CD4-positive, alpha-beta memory T cell (primary cell): ENCODE measurements at regions of chr5 and their contacts with region 1.

Region 1: DNA sequence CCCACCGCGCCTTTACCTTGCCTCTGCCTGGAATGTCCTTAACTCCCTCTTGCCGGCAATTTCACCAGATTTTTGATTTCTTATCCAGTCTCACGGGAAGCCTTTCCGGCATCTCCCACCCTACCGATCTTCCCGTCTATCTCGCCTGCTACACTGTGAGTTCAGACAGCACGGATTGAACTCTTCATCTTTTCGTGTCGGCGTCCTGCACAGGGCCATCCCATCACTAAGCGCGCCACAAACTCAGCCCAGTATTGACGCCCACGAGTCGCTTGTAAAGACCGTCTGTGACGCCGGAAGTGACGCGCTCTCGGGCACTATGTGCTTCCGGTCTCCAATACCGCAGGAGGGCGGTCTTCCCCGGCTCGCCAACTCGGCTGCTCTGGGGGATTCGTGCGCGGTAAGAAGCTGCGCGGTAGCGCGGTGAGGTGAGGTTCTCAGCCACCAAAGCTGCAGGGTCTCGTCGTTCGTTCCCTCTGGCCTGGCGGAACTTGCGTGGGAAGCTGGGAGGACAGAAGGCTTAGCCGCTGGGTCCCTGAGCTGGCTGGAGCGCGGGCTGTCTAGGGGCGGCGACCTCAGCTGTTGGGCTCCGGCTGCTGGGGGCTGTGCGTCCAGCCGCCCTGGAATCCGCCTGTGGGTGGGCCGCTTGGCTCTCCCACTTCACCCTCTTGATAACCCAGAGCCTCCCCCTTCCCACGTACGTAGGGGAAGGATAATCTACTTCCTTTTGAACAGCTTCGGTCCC is at the start of gene ZCCHC9:
- DNase-seq: peak; percentile 90 to 94 (median 92)
- H3K4me3 ChIP-seq: peak within 1 kb of the TSS; percentile 98 to 99
- H3K4me3 Mint-ChIP-seq: peak within 1 kb of the TSS; percentile 91 to 99 (median 94)
- H3K27ac ChIP-seq: peak within 1 kb of the TSS; percentile 83
- H3K27ac Mint-ChIP-seq: peak within 1 kb of the TSS; percentile 87 to 99 (median 97)
- H3K4me1 ChIP-seq: peaks cover 30% of the 10 kb centered on the region
- H3K4me1 Mint-ChIP-seq: peaks cover 30 to 67% (median 49%) of the 10 kb centered on the region in 4 donors
- H3K27me3 ChIP-seq: no peaks in the 10 kb centered on the region
- H3K27me3 Mint-ChIP-seq: no peaks in the 10 kb centered on the region
- total RNA-seq, gene ZCCHC9: 25.2 to 26.1 TPM

Region 2: GRCh38 chr5:79612667-79613198 is 1688.7 kb before region 1 on chr5:
- CTCF ChIA-PET with region 1: no interaction called
- POLR2A ChIA-PET with region 1: interaction called, 3 read pairs
- intact Hi-C with region 1: loop called (anchors 10 kb)
- DNase-seq: no peak
- H3K4me3 ChIP-seq: peak overlapping the region; percentile 67 to 94
- H3K4me3 Mint-ChIP-seq: peak overlapping the region; percentile 94 to 100 (median 99)
- H3K27ac ChIP-seq: peak overlapping the region; percentile 96
- H3K27ac Mint-ChIP-seq: peak overlapping the region; percentile 98 to 99 (median 98)
- H3K4me1 ChIP-seq: peaks cover 32% of the 10 kb centered on the region
- H3K4me1 Mint-ChIP-seq: peaks cover 24 to 53% (median 36%) of the 10 kb centered on the region in 4 donors
- H3K27me3 ChIP-seq: no peaks in the 10 kb centered on the region
- H3K27me3 Mint-ChIP-seq: peaks cover 0 to 8% of the 10 kb centered on the region in 2 donors

Region 3: GRCh38 chr5:80654391-80655230 is 646.8 kb before region 1 on chr5 and contains the starts of genes DHFR and MSH3:
- CTCF ChIA-PET with region 1: no interaction called
- POLR2A ChIA-PET with region 1: interaction called, 4 read pairs
- intact Hi-C with region 1: loop called (anchors 1 kb)
- DNase-seq: peak; percentile 86 to 91 (median 91)
- H3K4me3 ChIP-seq: peak within 1 kb of the TSS; percentile 64 to 79
- H3K4me3 Mint-ChIP-seq: peak within 1 kb of the TSS; percentile 86 to 97 (median 94)
- H3K27ac ChIP-seq: peak within 1 kb of the TSS; percentile 67
- H3K27ac Mint-ChIP-seq: peak within 1 kb of the TSS; percentile 86 to 99 (median 97)
- H3K4me1 ChIP-seq: peaks cover 34% of the 10 kb centered on the region
- H3K4me1 Mint-ChIP-seq: peaks cover 20 to 37% (median 27%) of the 10 kb centered on the region in 4 donors
- H3K27me3 ChIP-seq: no peaks in the 10 kb centered on the region
- H3K27me3 Mint-ChIP-seq: no peaks in the 10 kb centered on the region
- total RNA-seq, gene DHFR: 18.5 to 19.2 TPM
- total RNA-seq, gene MSH3: 14.3 to 17.1 TPM

Region 4: DNA sequence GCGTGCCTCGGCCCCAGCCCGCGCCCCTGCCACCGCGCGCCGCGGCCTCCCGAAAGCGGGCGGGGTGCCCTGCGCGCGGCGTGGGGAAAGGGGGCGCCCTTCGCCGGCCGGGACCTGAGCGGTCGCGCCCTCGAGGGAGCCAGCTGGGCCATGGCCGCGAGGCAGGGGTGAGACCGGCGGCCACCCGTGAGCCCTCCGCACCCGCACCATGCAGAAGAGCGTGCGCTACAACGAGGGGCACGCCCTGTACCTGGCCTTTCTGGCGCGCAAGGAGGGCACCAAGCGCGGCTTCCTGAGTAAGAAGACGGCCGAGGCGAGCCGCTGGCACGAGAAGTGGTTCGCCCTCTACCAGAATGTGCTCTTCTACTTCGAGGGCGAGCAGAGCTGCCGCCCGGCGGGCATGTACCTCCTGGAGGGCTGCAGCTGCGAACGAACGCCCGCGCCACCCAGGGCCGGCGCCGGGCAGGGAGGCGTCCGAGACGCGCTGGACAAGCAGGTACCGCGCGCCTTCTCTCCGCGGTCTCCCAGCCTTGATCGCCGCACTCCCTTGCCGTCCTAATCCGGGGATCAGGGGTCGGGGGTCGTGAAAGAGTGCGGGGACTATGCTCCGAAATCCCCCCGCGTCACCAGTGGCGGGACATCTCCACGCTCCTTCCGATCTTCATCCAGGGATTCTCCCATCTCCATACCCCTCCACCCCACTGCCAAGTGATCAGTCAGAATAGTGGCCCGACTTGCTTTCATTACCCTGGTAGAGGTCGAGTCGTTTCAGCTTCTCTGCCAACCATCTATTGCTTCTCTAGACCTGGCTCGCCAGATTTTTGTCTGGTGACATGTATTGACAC is 340.7 kb before region 1 on chr5:
- CTCF ChIA-PET with region 1: no interaction called
- POLR2A ChIA-PET with region 1: no interaction called
- intact Hi-C with region 1: loop called (anchors 5 kb)
- DNase-seq: peak; percentile 45 to 59 (median 55)
- H3K4me3 ChIP-seq: peak overlapping the region; percentile 84 to 85
- H3K4me3 Mint-ChIP-seq: peak overlapping the region; percentile 87 to 97 (median 94)
- H3K27ac ChIP-seq: peak overlapping the region; percentile 44
- H3K27ac Mint-ChIP-seq: peak overlapping the region; percentile 76 to 94 (median 82)
- H3K4me1 ChIP-seq: peaks cover 52% of the 10 kb centered on the region
- H3K4me1 Mint-ChIP-seq: peaks cover 40 to 64% (median 50%) of the 10 kb centered on the region in 4 donors
- H3K27me3 ChIP-seq: no peaks in the 10 kb centered on the region
- H3K27me3 Mint-ChIP-seq: no peaks in the 10 kb centered on the region

Region 5: DNA sequence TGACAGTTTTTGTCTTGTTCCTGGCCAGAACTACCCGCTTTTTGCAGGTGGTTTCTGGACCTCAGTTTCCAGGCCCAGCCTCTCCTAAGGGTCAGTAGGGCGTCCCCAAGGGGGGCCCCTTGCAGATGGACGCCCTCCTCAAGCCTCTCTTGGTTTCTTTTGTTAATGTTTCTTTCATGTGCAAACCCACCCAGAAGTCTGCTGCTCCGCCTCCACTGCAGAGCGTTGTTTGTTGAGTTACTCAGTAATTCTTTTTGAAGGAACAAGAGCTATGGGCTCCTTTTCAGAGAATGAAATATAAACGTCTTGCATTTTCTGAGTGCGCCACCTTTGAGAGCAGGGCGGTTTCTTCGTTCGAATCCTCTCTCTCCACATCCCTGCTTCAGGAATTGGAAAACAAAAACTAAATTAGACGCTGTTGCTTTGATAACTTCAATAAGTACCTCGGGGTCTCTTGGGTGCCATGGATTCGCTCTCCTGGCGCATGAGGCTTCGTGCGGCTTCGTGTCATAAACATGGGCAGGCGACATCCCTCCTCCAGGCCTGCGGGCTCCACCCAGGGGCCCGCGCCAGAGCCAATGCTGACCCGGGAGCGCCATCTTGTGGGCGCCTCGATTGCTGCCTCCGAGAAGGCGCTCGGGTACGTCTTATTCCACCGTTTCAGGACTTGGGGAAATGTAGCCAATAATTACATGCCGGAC is 106.7 kb before region 1 on chr5:
- CTCF ChIA-PET with region 1: interaction called, 10 read pairs
- POLR2A ChIA-PET with region 1: no interaction called
- intact Hi-C with region 1: no loop called
- DNase-seq: peak; percentile 68 to 77 (median 76)
- H3K4me3 ChIP-seq: no peak overlapping the region
- H3K4me3 Mint-ChIP-seq: peak overlapping the region in 7 of 8 donors; percentile 15 to 74 (median 48)
- H3K27ac ChIP-seq: no peak overlapping the region
- H3K27ac Mint-ChIP-seq: peak overlapping the region in 5 of 7 donors; percentile 64 to 87 (median 81)
- H3K4me1 ChIP-seq: peaks cover 8% of the 10 kb centered on the region
- H3K4me1 Mint-ChIP-seq: peaks cover 5 to 10% (median 8%) of the 10 kb centered on the region in 4 donors
- H3K27me3 ChIP-seq: no peaks in the 10 kb centered on the region
- H3K27me3 Mint-ChIP-seq: no peaks in the 10 kb centered on the region

Region 6: DNA sequence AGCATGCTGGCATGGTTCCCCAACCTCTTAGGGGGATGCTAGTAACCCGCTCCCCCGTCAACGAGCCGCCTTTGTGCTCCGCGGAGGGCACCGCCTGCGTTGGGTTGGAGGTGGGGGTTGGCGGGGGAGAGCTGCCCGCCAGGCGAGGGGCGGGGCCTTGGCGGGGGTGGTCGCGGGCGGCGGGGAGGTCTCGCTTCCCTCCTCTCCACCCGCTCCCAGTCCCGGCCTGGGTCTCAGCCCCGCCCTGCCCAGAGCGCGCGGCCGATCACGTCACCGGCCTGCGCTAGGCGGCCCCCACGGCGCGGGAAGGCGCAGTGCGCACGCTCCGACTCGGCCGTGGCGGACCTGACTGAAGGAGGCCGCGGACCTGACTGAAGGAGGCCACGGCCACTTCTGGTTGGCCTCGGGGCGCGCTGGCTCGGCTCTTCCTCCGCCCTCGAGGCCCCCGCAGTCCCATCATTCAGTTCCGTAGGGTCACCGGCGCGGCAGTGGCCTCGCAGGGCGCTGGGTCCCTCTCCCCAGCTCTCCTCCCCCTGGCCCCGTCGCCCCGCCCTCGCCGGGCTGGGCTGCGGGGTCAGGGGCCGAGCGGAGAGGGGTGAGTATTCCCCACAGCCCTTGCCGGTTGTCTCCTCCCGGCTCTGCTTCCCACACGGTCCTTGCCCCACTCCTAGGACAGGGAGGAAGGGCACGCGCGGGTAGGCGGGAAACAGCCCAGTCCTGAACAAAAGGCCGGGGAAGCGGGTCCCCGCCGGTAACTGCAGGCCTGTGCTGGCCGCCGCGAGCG is 670.5 kb after region 1 on chr5 and contains the start of gene ATG10:
- CTCF ChIA-PET with region 1: no interaction called
- POLR2A ChIA-PET with region 1: interaction called, 3 read pairs
- intact Hi-C with region 1: loop called (anchors 1 kb)
- DNase-seq: peak; percentile 80 to 88 (median 86)
- H3K4me3 ChIP-seq: peak within 1 kb of the TSS; percentile 88 to 94
- H3K4me3 Mint-ChIP-seq: peak within 1 kb of the TSS; percentile 87 to 100 (median 98)
- H3K27ac ChIP-seq: peak within 1 kb of the TSS; percentile 93
- H3K27ac Mint-ChIP-seq: peak within 1 kb of the TSS; percentile 96 to 100 (median 99)
- H3K4me1 ChIP-seq: peaks cover 24% of the 10 kb centered on the region
- H3K4me1 Mint-ChIP-seq: peaks cover 8 to 31% (median 22%) of the 10 kb centered on the region in 4 donors
- H3K27me3 ChIP-seq: no peaks in the 10 kb centered on the region
- H3K27me3 Mint-ChIP-seq: no peaks in the 10 kb centered on the region
- total RNA-seq, gene ATG10: 7.5 to 7.9 TPM